Activated B cell treated with CpG ODN at 0.5 μM for 24 hours (primary cell): ENCODE measurements at regions of chr11 and their contacts with region 1.

Region 1: GRCh38 chr11:65111744-65112414 is at the start of gene TM7SF2:
- DNase-seq: peak; percentile 90
- ATAC-seq: peak; percentile 78
- H3K4me3 Mint-ChIP-seq: peak within 1 kb of the TSS; percentile 89
- H3K27ac Mint-ChIP-seq: peak within 1 kb of the TSS; percentile 77
- H3K4me1 Mint-ChIP-seq: peaks cover 50% of the 10 kb centered on the region
- H3K27me3 Mint-ChIP-seq: no peaks in the 10 kb centered on the region
- CTCF ChIP-seq: no peak
- total RNA-seq, gene TM7SF2: 24.6 and 25.4 TPM in 2 replicates

Region 2: GRCh38 chr11:65036931-65037330 is 74.9 kb before region 1 on chr11:
- CTCF ChIA-PET with region 1: no interaction called
- POLR2A ChIA-PET with region 1: no interaction called
- intact Hi-C with region 1: no loop called
- DNase-seq: no peak
- ATAC-seq: no peak
- H3K4me3 Mint-ChIP-seq: no peak overlapping the region
- H3K27ac Mint-ChIP-seq: no peak overlapping the region
- H3K4me1 Mint-ChIP-seq: peaks cover 7% of the 10 kb centered on the region
- H3K27me3 Mint-ChIP-seq: no peaks in the 10 kb centered on the region
- CTCF ChIP-seq: no peak

Region 3: GRCh38 chr11:65083834-65084597 is 27.9 kb before region 1 on chr11 and contains the starts of genes CDCA5 and ZFPL1:
- CTCF ChIA-PET with region 1: no interaction called
- POLR2A ChIA-PET with region 1: no interaction called
- intact Hi-C with region 1: loop called (anchors 1 kb)
- DNase-seq: peak; percentile 97
- ATAC-seq: peak; percentile 92
- H3K4me3 Mint-ChIP-seq: peak within 1 kb of the TSS; percentile 93
- H3K27ac Mint-ChIP-seq: peak within 1 kb of the TSS; percentile 94
- H3K4me1 Mint-ChIP-seq: peaks cover 25% of the 10 kb centered on the region
- H3K27me3 Mint-ChIP-seq: no peaks in the 10 kb centered on the region
- CTCF ChIP-seq: no peak
- total RNA-seq, gene CDCA5: 2.6 and 3.4 TPM in 2 replicates
- total RNA-seq, gene ZFPL1: 35.7 and 36.6 TPM in 2 replicates

Region 4: GRCh38 chr11:65134386-65135253 is 22.7 kb after region 1 on chr11 and contains the start of gene SYVN1:
- CTCF ChIA-PET with region 1: interaction called, 28 read pairs
- POLR2A ChIA-PET with region 1: interaction called, 546 read pairs
- intact Hi-C with region 1: loop called (anchors 1 kb)
- DNase-seq: peak; percentile 92
- ATAC-seq: peak; percentile 60
- H3K4me3 Mint-ChIP-seq: peak within 1 kb of the TSS; percentile 99
- H3K27ac Mint-ChIP-seq: peak within 1 kb of the TSS; percentile 99
- H3K4me1 Mint-ChIP-seq: peaks cover 64% of the 10 kb centered on the region
- H3K27me3 Mint-ChIP-seq: no peaks in the 10 kb centered on the region
- CTCF ChIP-seq: no peak
- total RNA-seq, gene SYVN1: 232 and 238 TPM in 2 replicates

Region 5: GRCh38 chr11:65261591-65262380 is 149.9 kb after region 1 on chr11 and contains the start of gene POLA2:
- CTCF ChIA-PET with region 1: interaction called, 14 read pairs
- POLR2A ChIA-PET with region 1: interaction called, 11 read pairs
- intact Hi-C with region 1: loop called (anchors 2 kb)
- DNase-seq: peak; percentile 98
- ATAC-seq: peak; percentile 83
- H3K4me3 Mint-ChIP-seq: peak within 1 kb of the TSS; percentile 90
- H3K27ac Mint-ChIP-seq: peak within 1 kb of the TSS; percentile 91
- H3K4me1 Mint-ChIP-seq: peaks cover 27% of the 10 kb centered on the region
- H3K27me3 Mint-ChIP-seq: no peaks in the 10 kb centered on the region
- CTCF ChIP-seq: no peak
- total RNA-seq, gene POLA2: 37.1 and 43.4 TPM in 2 replicates

Region 6: GRCh38 chr11:65516135-65516935 is 404.5 kb after region 1 on chr11:
- CTCF ChIA-PET with region 1: no interaction called
- POLR2A ChIA-PET with region 1: no interaction called
- intact Hi-C with region 1: loop called (anchors 5 kb)
- DNase-seq: no peak
- ATAC-seq: no peak
- H3K4me3 Mint-ChIP-seq: no peak overlapping the region
- H3K27ac Mint-ChIP-seq: peak overlapping the region; percentile 56
- H3K4me1 Mint-ChIP-seq: peaks cover 4% of the 10 kb centered on the region
- H3K27me3 Mint-ChIP-seq: no peaks in the 10 kb centered on the region
- CTCF ChIP-seq: no peak